K562 (cell line): ENCODE measurements at regions of chr6 and their contacts with region 1.

Region 1: DNA sequence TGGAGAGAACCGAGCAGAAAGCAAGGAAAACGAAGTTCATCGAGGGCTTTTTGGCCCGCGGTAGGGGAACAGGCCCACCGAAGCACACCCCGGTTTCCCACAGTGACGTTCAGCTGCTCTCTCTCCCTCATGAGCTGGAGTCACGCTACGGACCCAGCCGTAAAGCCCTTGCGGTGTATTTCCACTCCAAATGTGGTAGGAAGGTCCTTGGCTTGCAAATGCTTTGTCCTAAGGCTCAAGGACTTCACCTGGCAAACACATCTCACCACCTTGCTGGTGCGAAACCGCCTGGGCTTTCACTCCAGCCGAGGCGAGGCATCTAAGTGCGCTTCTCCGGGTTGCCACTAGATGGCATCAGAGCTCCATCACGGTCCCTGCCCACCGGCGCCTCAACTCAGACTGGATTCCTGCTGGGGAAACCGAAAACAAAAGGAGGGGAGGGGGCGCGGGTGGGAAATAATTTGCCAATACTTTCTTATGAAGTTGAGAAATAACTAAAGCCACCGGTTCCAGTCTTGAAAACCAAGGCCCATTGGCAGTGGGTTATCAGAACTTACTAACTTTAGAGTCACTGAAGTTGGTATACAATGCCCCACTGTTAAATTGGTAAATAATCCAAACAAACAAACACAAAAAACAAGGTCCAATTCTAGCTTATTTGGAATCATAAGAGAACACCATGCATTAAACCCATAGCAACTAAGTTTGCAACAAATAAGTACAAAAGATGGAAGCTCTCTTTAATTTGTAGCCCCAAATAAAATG is 13.4 kb upstream of the FOXC1 start:
- DNase-seq: peak; percentile 69 to 90 (median 88)
- ATAC-seq: peak; percentile 94
- H3K4me3 ChIP-seq: no peak overlapping the region
- H3K27ac ChIP-seq: no peak overlapping the region
- H3K4me1 ChIP-seq: peaks cover 0 to 11% of the 10 kb centered on the region in 2 experiments; a peak in 1 of 5 replicates
- H3K27me3 ChIP-seq: peaks cover 43 to 70% of the 10 kb centered on the region in 2 experiments
- CTCF ChIP-seq: peak; percentile 86 to 97 (median 91)
- EP300 ChIP-seq: no peak
- POLR2A ChIP-seq: no peak
- RAD21 ChIP-seq: peak; percentile 93 to 94

Region 2: DNA sequence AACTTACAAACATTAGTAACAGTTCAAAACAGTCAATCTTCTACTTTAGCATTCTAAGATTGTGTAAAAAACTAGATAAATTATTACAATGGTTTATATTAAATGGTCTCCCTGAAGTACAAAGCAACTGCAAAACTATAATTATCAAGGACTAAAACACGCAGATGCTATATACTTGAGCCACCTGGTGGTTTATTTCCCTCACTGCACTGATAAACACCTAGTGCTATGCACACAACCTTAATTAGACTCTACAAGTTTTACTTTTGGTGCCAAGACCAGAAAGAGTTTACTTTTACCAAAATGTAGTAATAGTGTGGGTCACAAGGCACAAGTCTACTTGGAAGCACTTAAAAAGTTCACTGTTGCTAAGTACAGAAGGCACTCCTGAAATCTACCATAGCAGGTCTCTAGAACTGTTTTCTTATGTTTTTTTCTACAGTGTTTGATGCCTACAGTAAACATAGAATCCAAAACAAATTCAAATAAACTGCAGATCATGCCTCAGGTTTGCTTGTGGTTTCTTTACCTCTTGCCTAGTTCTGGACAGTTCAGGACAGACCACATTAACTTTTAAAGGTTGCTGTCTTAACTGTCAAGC is 599.9 kb after region 1 on chr6:
- CTCF ChIA-PET with region 1: interaction called, 7 read pairs
- POLR2A ChIA-PET with region 1: no interaction called
- in situ Hi-C with region 1: no loop called
- intact Hi-C with region 1: loop called (anchors 1 kb)
- DNase-seq: peak; percentile 31 to 61 (median 49)
- ATAC-seq: peak; percentile 88
- H3K4me3 ChIP-seq: no peak overlapping the region
- H3K27ac ChIP-seq: no peak overlapping the region
- H3K4me1 ChIP-seq: no peaks in the 10 kb centered on the region; a peak in 1 of 5 replicates
- H3K27me3 ChIP-seq: peaks cover 0 to 14% of the 10 kb centered on the region in 2 experiments; a peak in 1 of 5 replicates
- CTCF ChIP-seq: peak; percentile 52 to 74 (median 71); a peak in 5 of 6 replicates
- EP300 ChIP-seq: no peak
- POLR2A ChIP-seq: no peak
- RAD21 ChIP-seq: peak; percentile 85 to 91

Region 3: GRCh38 chr6:2448820-2449571 is 852.7 kb after region 1 on chr6:
- CTCF ChIA-PET with region 1: interaction called, 5 read pairs
- POLR2A ChIA-PET with region 1: no interaction called
- in situ Hi-C with region 1: loop called (anchors 10 kb)
- intact Hi-C with region 1: loop called (anchors 2 kb)
- DNase-seq: peak; percentile 49 to 72 (median 60)
- ATAC-seq: peak; percentile 94
- H3K4me3 ChIP-seq: no peak overlapping the region
- H3K27ac ChIP-seq: no peak overlapping the region
- H3K4me1 ChIP-seq: no peaks in the 10 kb centered on the region
- H3K27me3 ChIP-seq: peaks cover 2 to 16% of the 10 kb centered on the region in 2 experiments; a peak in 3 of 5 replicates
- CTCF ChIP-seq: peak; percentile 61 to 81 (median 80)
- EP300 ChIP-seq: no peak
- POLR2A ChIP-seq: no peak
- RAD21 ChIP-seq: peak; percentile 60 to 69

Region 4: DNA sequence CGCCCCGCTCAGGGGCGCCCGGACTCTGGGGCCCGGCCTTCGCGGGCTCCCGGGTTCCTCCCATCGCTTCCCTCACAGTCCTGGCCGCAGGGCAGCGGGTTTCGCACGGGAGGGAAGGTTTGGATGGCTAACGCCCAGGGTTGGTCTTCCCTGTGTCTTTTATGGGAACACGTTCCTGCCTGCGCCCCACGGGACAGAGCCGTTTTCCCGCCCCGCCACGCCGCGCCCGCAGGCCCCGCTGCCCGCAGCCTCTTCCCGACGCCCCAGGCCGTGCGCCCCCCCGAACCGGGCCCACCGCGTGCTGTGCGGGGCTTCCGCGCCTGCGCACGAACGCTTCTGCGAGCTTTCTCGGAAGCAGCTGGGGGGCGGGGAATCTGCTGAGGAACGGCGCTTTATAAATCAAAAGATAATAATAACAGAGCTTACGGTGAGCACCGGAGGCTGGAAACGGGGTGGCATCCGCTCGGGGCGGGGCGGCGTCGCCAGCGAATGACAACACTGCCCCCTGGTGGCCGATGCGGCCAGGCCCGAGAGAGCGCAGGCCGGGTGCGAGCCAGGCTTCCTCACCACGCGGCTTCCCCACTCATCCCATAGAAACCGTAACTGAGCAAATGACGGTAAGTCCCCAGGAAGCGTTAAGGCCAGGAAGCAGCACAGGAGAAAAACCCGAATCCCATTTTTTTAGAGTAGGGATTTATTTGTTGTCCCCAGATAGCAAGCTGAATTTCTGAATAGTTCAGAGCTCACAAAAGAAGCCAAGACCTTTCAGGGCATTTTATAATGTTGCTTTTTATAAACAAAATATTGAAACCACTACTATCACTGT is 1038.1 kb after region 1 on chr6:
- CTCF ChIA-PET with region 1: interaction called, 9 read pairs
- POLR2A ChIA-PET with region 1: no interaction called
- in situ Hi-C with region 1: no loop called
- intact Hi-C with region 1: loop called (anchors 2 kb)
- DNase-seq: peak; percentile 85 to 94 (median 90)
- ATAC-seq: peak; percentile 99
- H3K4me3 ChIP-seq: no peak overlapping the region
- H3K27ac ChIP-seq: no peak overlapping the region
- H3K4me1 ChIP-seq: peaks cover 0 to 8% of the 10 kb centered on the region in 2 experiments; a peak in 2 of 5 replicates
- H3K27me3 ChIP-seq: peaks cover 46 to 78% of the 10 kb centered on the region in 2 experiments; a peak in 4 of 5 replicates
- CTCF ChIP-seq: peak; percentile 96 to 97 (median 96)
- EP300 ChIP-seq: no peak
- POLR2A ChIP-seq: no peak
- RAD21 ChIP-seq: peak; percentile 97

Region 5: GRCh38 chr6:2744209-2744771 is 1148.0 kb after region 1 on chr6:
- CTCF ChIA-PET with region 1: no interaction called
- POLR2A ChIA-PET with region 1: no interaction called
- in situ Hi-C with region 1: no loop called
- intact Hi-C with region 1: loop called (anchors 5 kb)
- DNase-seq: no peak
- ATAC-seq: peak; percentile 26; the same call in 2 of the 3 replicates
- H3K4me3 ChIP-seq: no peak overlapping the region
- H3K27ac ChIP-seq: no peak overlapping the region
- H3K4me1 ChIP-seq: peaks cover 5 to 6% of the 10 kb centered on the region in 2 experiments; a peak in 3 of 5 replicates
- H3K27me3 ChIP-seq: no peaks in the 10 kb centered on the region
- CTCF ChIP-seq: peak; percentile 26 to 47 (median 40); a peak in 3 of 6 replicates
- EP300 ChIP-seq: no peak
- POLR2A ChIP-seq: no peak
- RAD21 ChIP-seq: peak in 1 of 2 experiments; percentile 52; a peak in 2 of 4 replicates